Panc1 (cell line): ENCODE measurements at regions of chr9 and their contacts with region 1.

Region 1: GRCh38 chr9:36995927-36996705 is 38.0 kb downstream of the PAX5 start:
- DNase-seq: peak; percentile 63
- ATAC-seq: peak; percentile 92
- H3K4me3 ChIP-seq: peak overlapping the region; percentile 14 to 28; a peak in 3 of 4 replicates
- H3K27ac ChIP-seq: peak overlapping the region; percentile 24; the same call in 1 of the 2 replicates
- H3K4me1 ChIP-seq: peaks cover 4% of the 10 kb centered on the region
- H3K27me3 ChIP-seq: no peaks in the 10 kb centered on the region
- CTCF ChIP-seq: no peak

Region 2: GRCh38 chr9:36798350-36799065 is 197.6 kb before region 1 on chr9:
- CTCF ChIA-PET with region 1: interaction called, 3 read pairs
- POLR2A ChIA-PET with region 1: no interaction called
- in situ Hi-C with region 1: no loop called
- intact Hi-C with region 1: loop called (anchors 10 kb)
- DNase-seq: no peak
- ATAC-seq: peak; percentile 86
- H3K4me3 ChIP-seq: no peak overlapping the region
- H3K27ac ChIP-seq: no peak overlapping the region
- H3K4me1 ChIP-seq: no peaks in the 10 kb centered on the region
- H3K27me3 ChIP-seq: peaks cover 30% of the 10 kb centered on the region
- CTCF ChIP-seq: no peak

Region 3: GRCh38 chr9:36873247-36873875 is 122.8 kb before region 1 on chr9:
- CTCF ChIA-PET with region 1: interaction called, 22 read pairs
- POLR2A ChIA-PET with region 1: interaction called, 3 read pairs
- in situ Hi-C with region 1: no loop called
- intact Hi-C with region 1: loop called (anchors 1 kb)
- DNase-seq: peak; percentile 61
- ATAC-seq: peak; percentile 96
- H3K4me3 ChIP-seq: no peak overlapping the region
- H3K27ac ChIP-seq: no peak overlapping the region
- H3K4me1 ChIP-seq: peaks cover 4% of the 10 kb centered on the region; the same call in 1 of the 2 replicates
- H3K27me3 ChIP-seq: no peaks in the 10 kb centered on the region; the same call in 1 of the 2 replicates
- CTCF ChIP-seq: no peak

Region 4: DNA sequence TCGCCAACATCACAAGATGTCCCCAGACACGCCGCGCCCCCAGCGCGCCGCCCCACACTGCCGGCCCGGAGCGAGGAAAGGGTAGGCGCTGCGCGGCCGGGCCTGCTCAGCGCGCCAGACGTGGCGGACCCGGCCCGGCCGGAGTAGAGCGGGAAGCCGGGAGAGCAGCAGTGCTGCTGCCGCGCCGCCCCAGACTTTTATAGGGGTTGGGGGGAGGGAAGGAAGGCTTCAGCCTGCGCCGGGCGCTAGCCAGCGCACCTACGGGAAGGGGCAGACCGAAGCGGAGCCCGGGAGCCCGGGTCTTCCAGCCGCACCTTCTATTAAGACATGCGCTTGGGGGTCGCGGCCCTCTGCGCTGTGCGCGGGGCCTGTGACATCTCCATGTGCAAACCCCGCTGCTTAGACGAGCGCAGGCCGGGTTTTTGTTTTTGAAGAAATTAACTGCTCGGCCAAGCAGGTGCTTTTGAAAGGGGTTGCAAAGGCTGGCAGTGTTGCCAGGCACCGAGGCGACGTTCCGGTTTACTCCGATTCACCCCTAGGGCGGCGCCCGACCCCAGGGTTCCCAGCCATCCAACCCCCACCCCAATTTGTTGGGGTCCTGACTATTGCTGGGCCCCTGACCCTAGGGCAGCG is 38.3 kb after region 1 on chr9:
- CTCF ChIA-PET with region 1: no interaction called
- POLR2A ChIA-PET with region 1: interaction called, 15 read pairs
- in situ Hi-C with region 1: no loop called
- intact Hi-C with region 1: no loop called
- DNase-seq: no peak
- ATAC-seq: peak; percentile 54
- H3K4me3 ChIP-seq: peak overlapping the region; percentile 27 to 45
- H3K27ac ChIP-seq: no peak overlapping the region
- H3K4me1 ChIP-seq: peaks cover 19% of the 10 kb centered on the region
- H3K27me3 ChIP-seq: peaks cover 42% of the 10 kb centered on the region
- CTCF ChIP-seq: no peak

Region 5: GRCh38 chr9:37119907-37120842 is 124.1 kb after region 1 on chr9 and contains the start of gene ZCCHC7:
- CTCF ChIA-PET with region 1: no interaction called
- POLR2A ChIA-PET with region 1: no interaction called
- in situ Hi-C with region 1: no loop called
- intact Hi-C with region 1: loop called (anchors 10 kb)
- DNase-seq: peak; percentile 91
- ATAC-seq: peak; percentile 99
- H3K4me3 ChIP-seq: peak within 1 kb of the TSS; percentile 66 to 93
- H3K27ac ChIP-seq: peak within 1 kb of the TSS; percentile 93
- H3K4me1 ChIP-seq: peaks cover 21% of the 10 kb centered on the region
- H3K27me3 ChIP-seq: no peaks in the 10 kb centered on the region
- CTCF ChIP-seq: no peak
- total RNA-seq, gene ZCCHC7: 43.7 TPM

Region 6: DNA sequence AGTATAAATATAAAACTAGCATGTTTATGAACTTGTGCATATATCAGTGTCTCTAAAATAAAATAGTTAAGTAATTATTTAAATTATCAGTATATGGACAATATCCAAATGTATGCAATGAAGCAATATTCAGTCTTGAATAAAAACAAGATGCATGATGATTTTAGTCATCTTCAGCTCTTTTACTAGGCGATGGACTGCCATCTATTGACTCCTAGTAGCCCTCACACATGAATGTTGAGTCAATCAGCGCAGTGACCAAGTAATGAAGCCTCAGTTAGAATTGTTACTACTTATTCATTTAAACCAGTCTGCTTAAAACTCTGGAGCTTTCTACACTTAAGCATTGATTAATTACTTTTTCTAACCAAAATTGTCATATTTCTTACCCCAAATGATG is 333.5 kb after region 1 on chr9:
- CTCF ChIA-PET with region 1: interaction called, 7 read pairs
- POLR2A ChIA-PET with region 1: no interaction called
- in situ Hi-C with region 1: no loop called
- intact Hi-C with region 1: loop called (anchors 5 kb)
- DNase-seq: peak; percentile 20
- ATAC-seq: peak; percentile 84
- H3K4me3 ChIP-seq: no peak overlapping the region
- H3K27ac ChIP-seq: no peak overlapping the region
- H3K4me1 ChIP-seq: peaks cover 5% of the 10 kb centered on the region; the same call in 1 of the 2 replicates
- H3K27me3 ChIP-seq: no peaks in the 10 kb centered on the region
- CTCF ChIP-seq: peak; percentile 67; the same call in 1 of the 2 replicates